ENCODE measurements at regions of chr3 and their contacts with region 1.

Region 1: DNA sequence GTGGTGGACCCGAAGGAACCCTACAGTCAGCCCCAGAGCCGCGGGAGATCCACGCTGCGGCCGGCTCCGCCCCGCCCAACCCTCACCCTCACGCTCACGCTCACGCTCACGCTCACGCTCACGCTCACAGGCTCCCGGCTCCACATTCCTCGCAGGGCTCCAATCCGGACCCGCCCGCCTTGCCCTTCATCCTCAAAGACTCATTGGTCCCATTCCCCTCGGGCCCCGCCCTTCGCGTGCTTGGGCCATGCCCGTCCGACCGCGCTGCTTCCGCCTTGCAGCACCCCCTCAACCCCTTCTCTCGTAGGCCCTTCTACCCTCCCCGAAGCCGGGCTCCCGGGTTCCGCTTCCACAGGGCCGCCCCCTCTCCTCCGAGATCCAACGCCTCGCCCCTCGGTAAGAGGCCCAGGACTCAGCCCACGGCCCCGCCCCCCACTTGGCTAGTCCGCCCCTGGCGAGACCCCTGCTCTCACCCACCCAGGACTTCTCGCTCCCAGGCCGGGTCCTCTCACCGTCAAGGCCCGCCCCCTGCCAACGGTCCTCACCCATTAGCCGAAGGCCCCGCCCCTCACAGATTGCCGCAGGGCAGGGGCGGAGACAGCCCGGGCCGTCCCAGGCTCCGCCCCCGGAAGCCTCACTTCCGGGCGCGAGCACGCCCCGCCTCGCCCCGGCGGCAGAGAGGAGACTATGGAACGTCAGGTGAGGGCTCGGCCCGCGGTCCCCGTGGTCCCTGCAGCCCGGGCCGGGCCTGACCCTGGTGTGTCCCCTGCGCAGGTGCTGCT is at the start of gene APEH:
- DNase-seq: peak; percentile 99
- ATAC-seq: peak; percentile 91
- H3K4me3 Mint-ChIP-seq: peak within 1 kb of the TSS; percentile 93
- H3K27ac Mint-ChIP-seq: peak within 1 kb of the TSS; percentile 99
- H3K4me1 Mint-ChIP-seq: peaks cover 28% of the 10 kb centered on the region
- H3K27me3 Mint-ChIP-seq: no peaks in the 10 kb centered on the region
- total RNA-seq, gene APEH: 179 to 192 TPM

Region 2: GRCh38 chr3:49519296-49519695 is 154.6 kb before region 1 on chr3:
- CTCF ChIA-PET with region 1: interaction called, 10 read pairs
- POLR2A ChIA-PET with region 1: no interaction called
- DNase-seq: no peak
- ATAC-seq: no peak
- H3K4me3 Mint-ChIP-seq: no peak overlapping the region
- H3K27ac Mint-ChIP-seq: no peak overlapping the region
- H3K4me1 Mint-ChIP-seq: peaks cover 11% of the 10 kb centered on the region
- H3K27me3 Mint-ChIP-seq: no peaks in the 10 kb centered on the region

Region 3: GRCh38 chr3:49566312-49566711 is 107.6 kb before region 1 on chr3:
- CTCF ChIA-PET with region 1: interaction called, 11 read pairs
- POLR2A ChIA-PET with region 1: no interaction called
- DNase-seq: no peak
- ATAC-seq: no peak
- H3K4me3 Mint-ChIP-seq: no peak overlapping the region
- H3K27ac Mint-ChIP-seq: no peak overlapping the region
- H3K4me1 Mint-ChIP-seq: no peaks in the 10 kb centered on the region
- H3K27me3 Mint-ChIP-seq: peaks cover 16% of the 10 kb centered on the region